ENCODE measurements at regions of chr10 and their contacts with region 1.

Region 1: GRCh38 chr10:35126530-35127296 is at the start of gene CREM:
- DNase-seq: peak; percentile 97 to 100 (median 100)
- ATAC-seq: peak; percentile 80
- H3K4me3 ChIP-seq: peak within 1 kb of the TSS; percentile 62
- H3K4me3 Mint-ChIP-seq: peak within 1 kb of the TSS; percentile 98
- H3K27ac ChIP-seq: peak within 1 kb of the TSS; percentile 96 to 99
- H3K27ac Mint-ChIP-seq: peak within 1 kb of the TSS; percentile 93
- H3K4me1 ChIP-seq: peaks cover 25% of the 10 kb centered on the region
- H3K4me1 Mint-ChIP-seq: peaks cover 47% of the 10 kb centered on the region
- H3K27me3 ChIP-seq: no peaks in the 10 kb centered on the region
- H3K27me3 Mint-ChIP-seq: no peaks in the 10 kb centered on the region
- CTCF ChIP-seq: peak; percentile 86
- total RNA-seq, gene CREM: 65.7 to 67.0 TPM

Region 2: GRCh38 chr10:34967335-34967880 is 159.3 kb before region 1 on chr10:
- CTCF ChIA-PET with region 1: no interaction called
- POLR2A ChIA-PET with region 1: no interaction called
- intact Hi-C with region 1: no loop called
- DNase-seq: no peak
- ATAC-seq: no peak
- H3K4me3 ChIP-seq: no peak overlapping the region
- H3K4me3 Mint-ChIP-seq: no peak overlapping the region
- H3K27ac ChIP-seq: no peak overlapping the region
- H3K27ac Mint-ChIP-seq: no peak overlapping the region
- H3K4me1 ChIP-seq: no peaks in the 10 kb centered on the region
- H3K4me1 Mint-ChIP-seq: no peaks in the 10 kb centered on the region
- H3K27me3 ChIP-seq: no peaks in the 10 kb centered on the region
- H3K27me3 Mint-ChIP-seq: no peaks in the 10 kb centered on the region
- CTCF ChIP-seq: no peak

Region 3: DNA sequence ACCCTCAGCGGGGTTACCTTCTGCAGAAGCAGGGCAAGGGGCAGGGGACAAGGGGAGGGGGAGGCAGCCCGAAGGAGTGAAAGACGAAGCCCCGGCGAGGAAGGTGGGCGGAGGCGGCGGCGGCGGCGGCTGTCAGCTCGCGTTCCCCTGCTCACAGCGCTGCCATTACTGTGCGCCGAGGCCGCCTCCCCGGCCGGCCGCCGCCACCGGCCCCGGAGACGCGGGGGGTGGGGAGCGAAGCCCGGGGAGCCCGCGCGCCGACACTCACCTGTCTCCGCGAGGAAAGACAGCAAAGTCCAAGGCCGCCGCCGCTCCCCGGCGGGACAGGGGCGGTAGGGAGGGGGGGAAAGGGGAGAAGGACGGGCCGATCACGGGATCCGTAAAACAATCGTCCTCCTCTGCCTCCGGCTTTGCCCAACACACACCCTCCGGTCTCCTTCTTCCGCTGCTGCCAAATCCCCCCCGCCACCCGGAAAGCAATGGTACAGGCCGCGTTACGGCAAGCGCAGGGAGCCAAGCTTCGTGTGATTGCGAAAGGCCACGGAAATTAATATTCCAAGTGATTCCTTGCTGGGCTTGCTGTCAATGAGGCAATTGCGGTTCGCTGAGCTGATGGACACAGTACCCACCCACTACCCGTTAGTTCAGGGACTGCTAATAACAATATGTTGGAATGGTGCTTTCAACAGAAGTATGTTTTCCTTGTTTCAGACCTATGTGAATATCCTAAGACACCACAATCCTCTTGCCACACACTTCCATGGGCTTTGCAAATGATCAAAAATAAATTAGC is 36.4 kb before region 1 on chr10 and contains the start of gene CUL2:
- CTCF ChIA-PET with region 1: interaction called, 6 read pairs
- POLR2A ChIA-PET with region 1: interaction called, 36 read pairs
- intact Hi-C with region 1: loop called (anchors 2 to 5 kb)
- DNase-seq: peak; percentile 86 to 96 (median 90)
- ATAC-seq: peak; percentile 92
- H3K4me3 ChIP-seq: peak within 1 kb of the TSS; percentile 91
- H3K4me3 Mint-ChIP-seq: peak within 1 kb of the TSS; percentile 98
- H3K27ac ChIP-seq: peak within 1 kb of the TSS; percentile 94 to 96
- H3K27ac Mint-ChIP-seq: peak within 1 kb of the TSS; percentile 93
- H3K4me1 ChIP-seq: peaks cover 44% of the 10 kb centered on the region
- H3K4me1 Mint-ChIP-seq: peaks cover 56% of the 10 kb centered on the region
- H3K27me3 ChIP-seq: no peaks in the 10 kb centered on the region
- H3K27me3 Mint-ChIP-seq: peaks cover 7% of the 10 kb centered on the region
- CTCF ChIP-seq: no peak
- total RNA-seq, gene CUL2: 30.1 to 32.4 TPM

Region 4: GRCh38 chr10:35218339-35218955 is 91.7 kb after region 1 on chr10:
- CTCF ChIA-PET with region 1: interaction called, 10 read pairs
- POLR2A ChIA-PET with region 1: interaction called, 9 read pairs
- intact Hi-C with region 1: loop called in 1 of 2 experiments (anchors 1 kb)
- DNase-seq: peak; percentile 61 to 92 (median 80)
- ATAC-seq: peak; percentile 90
- H3K4me3 ChIP-seq: no peak overlapping the region
- H3K4me3 Mint-ChIP-seq: no peak overlapping the region
- H3K27ac ChIP-seq: no peak overlapping the region
- H3K27ac Mint-ChIP-seq: no peak overlapping the region
- H3K4me1 ChIP-seq: peaks cover 3% of the 10 kb centered on the region
- H3K4me1 Mint-ChIP-seq: peaks cover 7% of the 10 kb centered on the region
- H3K27me3 ChIP-seq: no peaks in the 10 kb centered on the region
- H3K27me3 Mint-ChIP-seq: peaks cover 12% of the 10 kb centered on the region
- CTCF ChIP-seq: peak; percentile 94

Region 5: GRCh38 chr10:35447693-35448407 is 321.1 kb after region 1 on chr10:
- CTCF ChIA-PET with region 1: no interaction called
- POLR2A ChIA-PET with region 1: interaction called, 7 read pairs
- intact Hi-C with region 1: loop called in 1 of 2 experiments (anchors 10 kb)
- DNase-seq: peak in 11 of 14 experiments; percentile 12 to 75 (median 25)
- ATAC-seq: peak; percentile 77
- H3K4me3 ChIP-seq: peak overlapping the region; percentile 15
- H3K4me3 Mint-ChIP-seq: peak overlapping the region; percentile 52
- H3K27ac ChIP-seq: peak overlapping the region; percentile 64 to 81
- H3K27ac Mint-ChIP-seq: peak overlapping the region; percentile 93
- H3K4me1 ChIP-seq: peaks cover 58% of the 10 kb centered on the region
- H3K4me1 Mint-ChIP-seq: peaks cover 80% of the 10 kb centered on the region
- H3K27me3 ChIP-seq: no peaks in the 10 kb centered on the region
- H3K27me3 Mint-ChIP-seq: no peaks in the 10 kb centered on the region
- CTCF ChIP-seq: no peak

Region 6: DNA sequence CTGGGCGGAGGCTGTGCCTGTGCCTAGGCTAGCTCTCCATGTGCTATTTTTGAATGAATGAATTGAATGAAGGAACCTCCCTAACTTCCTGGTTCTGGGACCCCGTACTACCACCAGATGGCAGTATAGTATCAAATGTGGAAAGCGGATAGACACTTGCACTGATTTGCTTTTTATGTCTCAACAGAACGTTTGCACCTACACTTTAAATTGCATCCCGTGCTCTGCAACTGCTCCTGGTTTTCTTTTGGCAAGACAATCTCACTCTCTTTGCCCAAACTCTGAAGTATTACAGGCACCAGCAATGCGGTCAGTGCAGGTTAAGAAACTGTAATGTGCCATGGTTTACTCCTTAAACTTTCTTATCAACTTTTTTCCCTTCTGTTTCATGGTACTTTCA is 508.9 kb after region 1 on chr10:
- CTCF ChIA-PET with region 1: no interaction called
- POLR2A ChIA-PET with region 1: no interaction called
- intact Hi-C with region 1: loop called in 1 of 2 experiments (anchors 5 kb)
- DNase-seq: peak in 6 of 14 experiments; percentile 22 to 76 (median 62)
- ATAC-seq: peak; percentile 78
- H3K4me3 ChIP-seq: no peak overlapping the region
- H3K4me3 Mint-ChIP-seq: no peak overlapping the region
- H3K27ac ChIP-seq: no peak overlapping the region
- H3K27ac Mint-ChIP-seq: no peak overlapping the region
- H3K4me1 ChIP-seq: peaks cover 10% of the 10 kb centered on the region
- H3K4me1 Mint-ChIP-seq: peaks cover 15% of the 10 kb centered on the region
- H3K27me3 ChIP-seq: peaks cover 12 to 29% of the 10 kb centered on the region in 2 experiments
- H3K27me3 Mint-ChIP-seq: peaks cover 76% of the 10 kb centered on the region
- CTCF ChIP-seq: peak; percentile 84

Measured in CD4-positive, alpha-beta T cell (primary cell).